Mammary epithelial cell (primary cell): ENCODE measurements at regions of chr9 and their contacts with region 1.

Region 1: DNA sequence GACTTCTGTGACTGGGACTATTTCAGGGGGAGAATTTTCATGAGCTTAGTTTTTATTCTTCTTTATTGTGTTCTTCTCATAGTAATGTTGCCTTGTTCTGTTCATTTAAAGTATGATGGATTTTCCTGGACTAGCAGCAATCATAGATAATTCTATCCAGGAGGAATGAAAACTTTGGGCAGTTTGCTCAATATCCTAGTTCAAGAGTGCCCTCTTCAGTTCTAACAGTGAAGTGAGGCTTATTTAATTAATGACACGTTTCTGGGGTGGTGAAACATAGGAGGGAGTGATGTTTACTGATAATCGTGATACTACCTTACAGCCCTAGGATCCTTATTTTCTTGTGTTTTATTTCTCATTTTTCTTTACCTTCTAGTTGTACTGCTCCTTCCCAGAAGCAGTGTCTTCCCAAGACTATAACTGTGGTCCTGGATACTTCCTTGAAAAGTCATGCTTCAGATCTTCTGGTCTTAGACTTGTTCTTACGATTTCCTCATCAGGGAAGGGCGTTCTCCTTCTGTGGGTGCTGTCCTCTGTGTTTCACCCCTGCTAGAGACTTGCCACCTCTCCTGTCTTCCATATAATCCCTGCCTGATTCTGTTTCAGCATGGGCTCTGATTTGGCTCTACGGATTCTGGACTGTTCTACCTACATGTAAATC is 57.4 kb downstream of the CFAP95 start:
- DNase-seq: peak; percentile 37
- H3K4me3 ChIP-seq: no peak overlapping the region
- H3K27ac ChIP-seq: no peak overlapping the region
- H3K4me1 ChIP-seq: no peaks in the 10 kb centered on the region
- H3K27me3 ChIP-seq: no peaks in the 10 kb centered on the region
- CTCF ChIP-seq: peak; percentile 64 to 72

Region 2: GRCh38 chr9:69066955-69067354 is 811.0 kb before region 1 on chr9:
- CTCF ChIA-PET with region 1: no interaction called
- dilution Hi-C with region 1: no loop called
- in situ Hi-C with region 1: loop called in 1 of 2 experiments (anchors 25 kb)
- intact Hi-C with region 1: no loop called
- DNase-seq: no peak
- H3K4me3 ChIP-seq: no peak overlapping the region
- H3K27ac ChIP-seq: no peak overlapping the region
- H3K4me1 ChIP-seq: no peaks in the 10 kb centered on the region
- H3K27me3 ChIP-seq: no peaks in the 10 kb centered on the region
- CTCF ChIP-seq: no peak

Region 3: DNA sequence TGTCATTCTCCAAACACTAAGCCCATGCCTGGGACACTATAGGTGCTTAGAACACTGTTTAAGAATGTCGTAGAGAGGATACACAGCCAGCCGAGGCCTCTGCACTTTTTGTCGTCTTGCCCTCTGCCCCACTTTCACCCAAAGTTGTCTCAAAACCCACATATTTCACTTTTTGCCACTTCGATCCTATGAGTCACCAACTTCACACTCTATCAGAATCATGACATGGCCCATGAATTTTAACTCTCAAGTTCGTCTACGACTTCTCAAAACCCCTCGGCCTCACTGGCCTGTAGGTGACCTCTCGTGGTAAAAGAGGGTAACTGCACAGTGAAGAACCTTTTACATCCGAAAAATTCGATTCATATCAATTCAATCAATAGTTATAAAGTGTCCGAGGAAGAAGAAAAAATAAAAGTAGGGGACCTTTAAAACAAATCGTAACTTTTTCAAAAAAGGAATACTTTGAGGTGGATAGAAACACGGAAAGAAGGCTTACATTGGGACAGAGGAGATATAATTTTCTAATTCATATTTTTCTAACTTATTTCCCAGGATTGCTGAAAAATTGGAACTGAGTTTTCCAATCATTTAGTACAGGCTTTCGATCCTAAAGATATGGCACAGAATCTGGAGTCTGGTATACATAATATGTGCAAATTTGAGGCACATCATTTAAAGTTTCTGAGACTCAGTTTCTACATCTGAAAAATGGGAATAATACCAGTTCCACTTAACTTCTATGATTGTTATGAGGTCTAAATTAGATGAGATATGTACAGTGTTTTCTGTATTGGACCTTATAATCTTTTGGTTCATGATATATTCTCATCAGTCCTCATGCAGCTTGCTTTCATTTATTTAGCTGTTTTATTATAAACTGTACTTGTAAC is 328.4 kb before region 1 on chr9:
- CTCF ChIA-PET with region 1: no interaction called
- dilution Hi-C with region 1: no loop called
- in situ Hi-C with region 1: no loop called
- intact Hi-C with region 1: loop called (anchors 5 kb)
- DNase-seq: no peak
- H3K4me3 ChIP-seq: no peak overlapping the region
- H3K27ac ChIP-seq: no peak overlapping the region
- H3K4me1 ChIP-seq: no peaks in the 10 kb centered on the region
- H3K27me3 ChIP-seq: peaks cover 12% of the 10 kb centered on the region
- CTCF ChIP-seq: peak; percentile 72 to 80

Region 4: GRCh38 chr9:69745716-69746437 is 132.1 kb before region 1 on chr9:
- CTCF ChIA-PET with region 1: no interaction called
- dilution Hi-C with region 1: no loop called
- in situ Hi-C with region 1: no loop called
- intact Hi-C with region 1: loop called (anchors 10 kb)
- DNase-seq: no peak
- H3K4me3 ChIP-seq: no peak overlapping the region
- H3K27ac ChIP-seq: no peak overlapping the region
- H3K4me1 ChIP-seq: peaks cover 4% of the 10 kb centered on the region
- H3K27me3 ChIP-seq: no peaks in the 10 kb centered on the region
- CTCF ChIP-seq: peak in 1 of 2 donors; percentile 32

Region 5: GRCh38 chr9:69919461-69920061 is 41.6 kb after region 1 on chr9:
- CTCF ChIA-PET with region 1: no interaction called
- dilution Hi-C with region 1: no loop called
- in situ Hi-C with region 1: no loop called
- intact Hi-C with region 1: loop called (anchors 1 kb)
- DNase-seq: peak; percentile 45
- H3K4me3 ChIP-seq: no peak overlapping the region
- H3K27ac ChIP-seq: no peak overlapping the region
- H3K4me1 ChIP-seq: peaks cover 14% of the 10 kb centered on the region
- H3K27me3 ChIP-seq: no peaks in the 10 kb centered on the region
- CTCF ChIP-seq: peak; percentile 64 to 70